ENCODE measurements at regions of chr12 and their contacts with region 1.

Region 1: GRCh38 chr12:11486623-11487444 is 91.5 kb upstream of the PRB2 start:
- DNase-seq: peak; percentile 63 to 74 (median 74)
- ATAC-seq: peak in 3 of 4 donors; percentile 69 to 84 (median 75)
- H3K4me3 ChIP-seq: no peak overlapping the region
- H3K27ac ChIP-seq: no peak overlapping the region
- H3K4me1 ChIP-seq: peaks cover 0 to 3% (median 0%) of the 10 kb centered on the region in 12 donors
- H3K27me3 ChIP-seq: no peaks in the 10 kb centered on the region
- CTCF ChIP-seq: peak; percentile 89 to 99 (median 96)
- POLR2A ChIP-seq: no peak

Region 2: GRCh38 chr12:10771132-10771733 is 715.6 kb before region 1 on chr12:
- intact Hi-C with region 1: loop called (anchors 1 to 5 kb)
- DNase-seq: no peak
- ATAC-seq: no peak
- H3K4me3 ChIP-seq: no peak overlapping the region
- H3K27ac ChIP-seq: no peak overlapping the region
- H3K4me1 ChIP-seq: no peaks in the 10 kb centered on the region
- H3K27me3 ChIP-seq: peaks cover 0 to 46% (median 13%) of the 10 kb centered on the region in 9 donors
- CTCF ChIP-seq: peak; percentile 53 to 87 (median 72)
- POLR2A ChIP-seq: no peak

Region 3: GRCh38 chr12:11202811-11203210 is 284.0 kb before region 1 on chr12:
- intact Hi-C with region 1: loop called in 4 of 10 experiments (anchors 2 to 10 kb)
- DNase-seq: no peak
- ATAC-seq: no peak
- H3K4me3 ChIP-seq: no peak overlapping the region
- H3K27ac ChIP-seq: no peak overlapping the region
- H3K4me1 ChIP-seq: no peaks in the 10 kb centered on the region
- H3K27me3 ChIP-seq: no peaks in the 10 kb centered on the region
- CTCF ChIP-seq: no peak
- POLR2A ChIP-seq: no peak

Region 4: DNA sequence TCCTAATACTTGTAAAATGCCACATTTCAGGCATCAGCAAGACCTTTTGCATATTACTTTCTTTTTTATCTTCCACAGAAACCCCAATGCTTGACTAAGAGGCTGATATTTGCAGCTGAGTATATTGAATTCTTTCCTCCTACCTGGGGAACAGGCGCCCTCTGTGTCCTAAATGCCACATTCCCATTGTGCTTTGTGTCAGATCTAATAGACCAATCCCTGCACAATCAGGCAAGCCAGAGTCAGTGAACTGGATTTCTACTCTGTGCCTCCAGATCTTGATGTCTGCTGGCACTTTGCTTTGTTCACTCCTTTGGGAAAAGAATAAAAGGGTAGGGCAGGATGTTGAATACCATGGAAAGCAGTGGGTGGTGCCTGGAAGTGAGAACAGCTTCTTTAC is 277.7 kb before region 1 on chr12:
- intact Hi-C with region 1: loop called in 1 of 10 experiments (anchors 10 kb)
- DNase-seq: no peak
- ATAC-seq: no peak
- H3K4me3 ChIP-seq: no peak overlapping the region
- H3K27ac ChIP-seq: no peak overlapping the region
- H3K4me1 ChIP-seq: no peaks in the 10 kb centered on the region
- H3K27me3 ChIP-seq: no peaks in the 10 kb centered on the region
- CTCF ChIP-seq: no peak
- POLR2A ChIP-seq: no peak

Region 5: GRCh38 chr12:11228296-11228879 is 258.4 kb before region 1 on chr12:
- intact Hi-C with region 1: loop called in 7 of 10 experiments (anchors 2 to 10 kb)
- DNase-seq: no peak
- ATAC-seq: peak in 1 of 4 donors; percentile 72
- H3K4me3 ChIP-seq: no peak overlapping the region
- H3K27ac ChIP-seq: no peak overlapping the region
- H3K4me1 ChIP-seq: no peaks in the 10 kb centered on the region
- H3K27me3 ChIP-seq: no peaks in the 10 kb centered on the region
- CTCF ChIP-seq: peak in 9 of 12 donors; percentile 16 to 58 (median 35)
- POLR2A ChIP-seq: no peak

Region 6: GRCh38 chr12:11238275-11238674 is 248.6 kb before region 1 on chr12:
- intact Hi-C with region 1: loop called in 2 of 10 experiments (anchors 10 kb)
- DNase-seq: no peak
- ATAC-seq: peak in 3 of 4 donors; percentile 42 to 85 (median 81)
- H3K4me3 ChIP-seq: no peak overlapping the region
- H3K27ac ChIP-seq: no peak overlapping the region
- H3K4me1 ChIP-seq: no peaks in the 10 kb centered on the region
- H3K27me3 ChIP-seq: no peaks in the 10 kb centered on the region
- CTCF ChIP-seq: no peak
- POLR2A ChIP-seq: no peak